ENCODE measurements at regions of chr12 and their contacts with region 1.

Region 1: DNA sequence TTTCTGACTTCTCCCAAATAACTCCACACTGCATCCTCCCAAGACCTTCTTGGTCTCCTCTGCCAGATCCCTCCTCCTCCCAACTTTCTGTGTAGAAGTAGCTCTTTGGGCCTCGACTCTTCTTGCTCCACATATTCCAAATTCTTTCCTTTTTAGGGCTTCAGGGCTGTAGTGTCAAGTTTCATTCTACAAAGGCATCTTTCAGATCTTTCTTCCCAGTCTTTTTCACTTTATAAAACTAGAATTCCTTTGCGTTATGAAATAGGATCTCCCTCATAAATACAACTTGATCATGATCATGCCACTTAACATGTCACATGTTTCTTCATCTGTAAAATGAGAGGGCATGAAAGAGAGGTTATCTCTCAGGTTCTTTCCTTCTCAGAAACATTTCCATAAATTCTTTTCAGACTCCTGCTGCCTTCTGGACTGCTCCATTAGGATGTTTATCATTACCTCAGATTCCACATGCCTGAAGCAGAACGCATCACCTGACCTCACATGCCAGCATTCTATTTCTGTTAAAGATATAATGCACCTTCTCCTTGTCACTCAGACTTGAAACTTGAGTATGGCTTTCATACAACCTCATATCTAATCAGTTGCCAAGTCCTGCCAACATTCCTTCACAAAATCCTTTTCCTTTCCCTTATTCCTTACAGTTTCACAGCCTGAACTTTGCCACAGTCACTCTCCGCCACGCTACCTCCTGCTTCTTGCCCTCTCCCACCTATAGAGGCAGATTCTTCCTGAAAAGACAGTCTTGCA is 8.5 kb downstream of the SLC38A1 start:
- DNase-seq: peak; percentile 39 to 75
- H3K4me3 ChIP-seq: peak overlapping the region; percentile 37
- H3K27ac ChIP-seq: peak overlapping the region; percentile 92
- H3K4me1 ChIP-seq: peaks cover 65% of the 10 kb centered on the region
- H3K27me3 ChIP-seq: no peaks in the 10 kb centered on the region
- CTCF ChIP-seq: no peak

Region 2: DNA sequence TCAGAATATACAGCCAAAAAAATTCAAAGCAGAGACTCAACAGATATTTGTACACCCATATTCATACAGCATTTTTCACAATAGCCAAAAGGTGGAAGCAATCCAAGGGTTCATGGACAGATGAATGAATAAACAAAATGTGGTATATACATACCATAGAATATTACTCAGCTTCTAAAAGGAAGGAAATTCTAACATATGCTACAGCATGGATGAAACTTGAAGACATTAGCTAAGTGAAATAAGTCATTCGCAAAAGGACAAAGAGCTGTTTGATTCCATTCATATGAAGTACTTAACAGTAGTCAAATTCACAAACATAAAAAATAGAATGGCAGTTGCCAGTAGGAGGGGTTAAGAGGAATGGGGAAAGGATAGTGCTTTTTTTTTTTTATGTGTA is 622.6 kb before region 1 on chr12:
- CTCF ChIA-PET with region 1: no interaction called
- POLR2A ChIA-PET with region 1: interaction called, 17 read pairs
- intact Hi-C with region 1: no loop called
- DNase-seq: peak in 1 of 2 experiments; percentile 85
- H3K4me3 ChIP-seq: no peak overlapping the region
- H3K27ac ChIP-seq: no peak overlapping the region
- H3K4me1 ChIP-seq: peaks cover 8% of the 10 kb centered on the region; the same call in 1 of the 2 replicates
- H3K27me3 ChIP-seq: no peaks in the 10 kb centered on the region
- CTCF ChIP-seq: no peak

Region 3: GRCh38 chr12:46005151-46005797 is 255.1 kb before region 1 on chr12:
- CTCF ChIA-PET with region 1: no interaction called
- POLR2A ChIA-PET with region 1: no interaction called
- intact Hi-C with region 1: no loop called
- DNase-seq: no peak
- H3K4me3 ChIP-seq: no peak overlapping the region
- H3K27ac ChIP-seq: no peak overlapping the region
- H3K4me1 ChIP-seq: no peaks in the 10 kb centered on the region
- H3K27me3 ChIP-seq: no peaks in the 10 kb centered on the region
- CTCF ChIP-seq: peak; percentile 73

Region 4: DNA sequence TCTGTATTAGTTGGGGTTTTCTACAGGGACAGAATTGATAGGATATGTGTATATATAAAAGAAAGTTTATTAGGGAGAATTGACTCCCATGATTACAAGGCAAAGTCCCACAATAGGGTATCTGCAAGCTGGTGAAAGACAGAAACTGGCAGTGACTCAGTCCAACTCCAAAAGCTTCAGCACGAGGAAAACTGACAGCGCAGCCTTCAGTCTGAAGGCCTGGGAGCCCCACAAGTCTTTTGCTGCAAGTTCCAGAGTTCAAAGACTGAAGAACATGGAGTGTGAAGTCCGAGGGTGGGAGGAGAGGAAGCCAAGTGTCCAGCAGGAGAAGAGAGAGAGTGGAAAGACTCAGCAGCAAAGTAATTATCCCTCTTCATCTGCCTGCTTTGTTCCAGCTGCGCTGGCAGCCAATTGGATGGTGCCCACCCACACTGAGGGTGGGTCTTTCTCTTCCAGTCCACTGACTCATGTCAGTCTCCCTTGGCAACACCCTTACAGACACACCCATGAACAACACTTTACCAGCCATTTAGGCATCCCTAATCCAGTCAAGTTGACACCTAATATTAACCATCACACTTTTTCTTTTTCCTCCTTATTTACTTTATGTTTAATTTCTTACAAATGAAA is 159.4 kb before region 1 on chr12:
- CTCF ChIA-PET with region 1: no interaction called
- POLR2A ChIA-PET with region 1: no interaction called
- intact Hi-C with region 1: no loop called
- DNase-seq: no peak
- H3K4me3 ChIP-seq: no peak overlapping the region
- H3K27ac ChIP-seq: no peak overlapping the region
- H3K4me1 ChIP-seq: no peaks in the 10 kb centered on the region
- H3K27me3 ChIP-seq: no peaks in the 10 kb centered on the region
- CTCF ChIP-seq: no peak

Region 5: GRCh38 chr12:46219884-46220655 is 40.3 kb before region 1 on chr12:
- CTCF ChIA-PET with region 1: no interaction called
- POLR2A ChIA-PET with region 1: no interaction called
- intact Hi-C with region 1: loop called (anchors 1 kb)
- DNase-seq: peak; percentile 73 to 97
- H3K4me3 ChIP-seq: peak overlapping the region; percentile 7; the same call in 1 of the 2 replicates
- H3K27ac ChIP-seq: peak overlapping the region; percentile 85
- H3K4me1 ChIP-seq: peaks cover 53% of the 10 kb centered on the region
- H3K27me3 ChIP-seq: no peaks in the 10 kb centered on the region
- CTCF ChIP-seq: no peak

Region 6: DNA sequence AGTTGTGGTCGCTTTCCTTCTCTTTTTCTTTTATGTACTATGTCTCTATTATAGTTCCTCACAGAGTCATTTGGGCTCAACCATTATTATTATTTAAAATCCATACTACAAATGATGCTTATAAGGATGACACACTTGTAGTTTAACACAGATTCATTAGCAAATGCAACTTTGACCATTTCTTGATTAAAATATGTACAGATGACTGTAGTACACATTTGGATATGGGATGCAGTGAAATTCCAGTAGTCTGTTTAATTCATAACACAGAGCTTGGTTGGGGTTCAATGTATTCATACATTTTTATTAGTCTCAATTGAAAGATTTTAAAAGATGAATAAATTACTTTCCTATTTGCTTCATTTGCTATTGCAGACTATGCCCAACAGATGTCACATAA is 21.5 kb before region 1 on chr12:
- CTCF ChIA-PET with region 1: interaction called, 23 read pairs
- POLR2A ChIA-PET with region 1: interaction called, 3 read pairs
- intact Hi-C with region 1: no loop called
- DNase-seq: no peak
- H3K4me3 ChIP-seq: no peak overlapping the region
- H3K27ac ChIP-seq: no peak overlapping the region
- H3K4me1 ChIP-seq: no peaks in the 10 kb centered on the region
- H3K27me3 ChIP-seq: no peaks in the 10 kb centered on the region
- CTCF ChIP-seq: no peak

Region 7: DNA sequence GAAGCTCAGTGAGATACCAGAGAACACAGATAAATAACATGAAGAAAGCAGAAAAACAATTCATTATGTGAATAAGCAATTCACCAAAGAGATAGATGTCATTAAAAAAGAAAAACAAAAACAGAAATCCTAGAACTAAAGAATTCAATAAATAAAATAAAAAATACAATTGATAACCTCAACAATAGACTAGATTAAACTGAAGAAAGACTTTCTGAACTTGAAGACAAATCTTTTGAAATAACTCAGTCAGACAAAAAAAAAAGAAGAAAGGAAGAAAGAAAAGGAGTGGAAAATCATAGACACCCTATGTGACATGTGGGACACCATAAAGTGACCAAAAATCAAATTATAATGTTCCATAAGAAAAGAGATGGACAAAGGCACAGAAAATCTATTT is 22.5 kb after region 1 on chr12:
- CTCF ChIA-PET with region 1: no interaction called
- POLR2A ChIA-PET with region 1: no interaction called
- intact Hi-C with region 1: no loop called
- DNase-seq: no peak
- H3K4me3 ChIP-seq: no peak overlapping the region
- H3K27ac ChIP-seq: no peak overlapping the region
- H3K4me1 ChIP-seq: no peaks in the 10 kb centered on the region
- H3K27me3 ChIP-seq: no peaks in the 10 kb centered on the region
- CTCF ChIP-seq: no peak